ENCODE measurements at regions of chr17 and their contacts with region 1.

Region 1: DNA sequence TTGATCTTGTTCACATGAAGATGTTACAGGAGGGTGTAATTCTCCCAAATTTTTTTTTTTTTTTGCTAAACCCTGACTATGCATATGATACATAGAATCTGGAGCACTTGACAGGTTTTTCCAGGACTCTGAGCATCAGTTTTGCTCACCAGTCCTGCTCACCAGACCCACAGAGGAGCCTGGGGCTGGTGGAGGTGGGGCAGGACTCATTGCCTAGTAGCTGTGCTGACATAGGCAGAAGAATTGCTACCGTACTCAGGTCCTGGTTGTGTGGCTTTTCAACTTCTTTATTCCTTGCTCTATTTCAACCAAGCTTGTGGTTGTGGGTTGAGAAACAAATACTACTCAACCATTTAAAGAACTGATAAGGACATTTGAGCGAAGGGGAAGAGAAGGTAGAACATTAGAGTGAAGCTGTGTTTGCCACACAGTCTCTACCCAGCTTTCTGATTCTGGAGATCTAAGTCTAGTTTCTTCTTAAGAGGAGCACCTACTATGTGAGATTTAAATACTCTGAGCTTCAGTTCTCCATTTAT is 212.4 kb downstream of the UTP18 start:
- DNase-seq: no peak
- H3K4me3 Mint-ChIP-seq: no peak overlapping the region
- H3K27ac Mint-ChIP-seq: no peak overlapping the region
- H3K4me1 Mint-ChIP-seq: no peaks in the 10 kb centered on the region
- H3K27me3 Mint-ChIP-seq: peaks cover 11% of the 10 kb centered on the region

Region 2: DNA sequence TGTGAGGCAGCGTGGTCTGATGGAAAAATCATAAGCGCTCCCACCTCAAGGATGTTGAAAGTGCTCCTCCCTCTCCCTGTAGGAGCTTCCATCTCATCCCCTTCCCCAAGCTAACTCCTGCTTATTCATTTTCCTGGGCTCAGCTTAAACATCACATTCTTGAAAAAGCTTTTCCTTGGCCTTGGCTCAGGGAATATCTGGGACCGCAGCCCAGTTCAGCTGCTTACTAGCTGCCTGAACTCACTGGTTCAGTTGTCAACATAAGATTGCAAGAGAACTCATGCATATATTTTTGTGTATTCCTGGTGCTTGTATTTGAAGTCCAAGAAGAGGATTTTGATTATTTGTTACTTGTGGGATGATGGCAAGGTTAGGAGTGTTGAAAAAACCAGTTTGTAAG is 120.8 kb before region 1 on chr17:
- CTCF ChIA-PET with region 1: no interaction called
- POLR2A ChIA-PET with region 1: no interaction called
- DNase-seq: no peak
- H3K4me3 Mint-ChIP-seq: no peak overlapping the region
- H3K27ac Mint-ChIP-seq: no peak overlapping the region
- H3K4me1 Mint-ChIP-seq: no peaks in the 10 kb centered on the region
- H3K27me3 Mint-ChIP-seq: peaks cover 13% of the 10 kb centered on the region

Region 3: GRCh38 chr17:51461578-51462004 is 11.1 kb before region 1 on chr17:
- CTCF ChIA-PET with region 1: interaction called, 20 read pairs
- POLR2A ChIA-PET with region 1: no interaction called
- DNase-seq: peak; percentile 64
- H3K4me3 Mint-ChIP-seq: no peak overlapping the region
- H3K27ac Mint-ChIP-seq: no peak overlapping the region
- H3K4me1 Mint-ChIP-seq: no peaks in the 10 kb centered on the region
- H3K27me3 Mint-ChIP-seq: peaks cover 2% of the 10 kb centered on the region

Region 4: GRCh38 chr17:51487947-51488346 is 15.2 kb after region 1 on chr17:
- CTCF ChIA-PET with region 1: no interaction called
- POLR2A ChIA-PET with region 1: no interaction called
- DNase-seq: peak; percentile 16
- H3K4me3 Mint-ChIP-seq: no peak overlapping the region
- H3K27ac Mint-ChIP-seq: no peak overlapping the region
- H3K4me1 Mint-ChIP-seq: peaks cover 3% of the 10 kb centered on the region
- H3K27me3 Mint-ChIP-seq: no peaks in the 10 kb centered on the region